ENCODE measurements at regions of chr12 and their contacts with region 1.

Region 1: GRCh38 chr12:112198120-112198733 is 72.9 kb downstream of the TRAFD1 start:
- DNase-seq: peak; percentile 92

Region 2: DNA sequence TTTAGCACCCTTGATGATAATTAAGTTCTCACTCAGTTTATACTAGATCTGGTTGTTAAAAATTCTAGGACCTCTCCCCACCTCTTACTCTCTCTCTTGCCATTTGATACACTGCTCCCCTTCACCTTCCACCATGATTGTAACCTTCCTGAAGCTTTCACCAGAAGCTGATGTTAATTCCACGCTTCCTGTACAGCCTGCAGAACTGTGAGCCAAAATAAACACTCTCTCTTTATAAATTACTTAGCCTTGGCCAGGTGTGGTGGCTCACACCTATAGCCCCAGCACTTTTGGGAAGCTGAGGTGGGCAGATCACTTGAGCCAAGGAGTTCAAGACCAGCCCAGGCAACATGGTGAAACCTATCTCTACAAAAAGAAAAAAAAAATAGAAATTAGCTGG is 195.1 kb after region 1 on chr12:
- in situ Hi-C with region 1: loop called (anchors 10 kb)
- DNase-seq: no peak

Measured in G401 (cell line).